ENCODE measurements at regions of chr16 and their contacts with region 1.

Region 1: DNA sequence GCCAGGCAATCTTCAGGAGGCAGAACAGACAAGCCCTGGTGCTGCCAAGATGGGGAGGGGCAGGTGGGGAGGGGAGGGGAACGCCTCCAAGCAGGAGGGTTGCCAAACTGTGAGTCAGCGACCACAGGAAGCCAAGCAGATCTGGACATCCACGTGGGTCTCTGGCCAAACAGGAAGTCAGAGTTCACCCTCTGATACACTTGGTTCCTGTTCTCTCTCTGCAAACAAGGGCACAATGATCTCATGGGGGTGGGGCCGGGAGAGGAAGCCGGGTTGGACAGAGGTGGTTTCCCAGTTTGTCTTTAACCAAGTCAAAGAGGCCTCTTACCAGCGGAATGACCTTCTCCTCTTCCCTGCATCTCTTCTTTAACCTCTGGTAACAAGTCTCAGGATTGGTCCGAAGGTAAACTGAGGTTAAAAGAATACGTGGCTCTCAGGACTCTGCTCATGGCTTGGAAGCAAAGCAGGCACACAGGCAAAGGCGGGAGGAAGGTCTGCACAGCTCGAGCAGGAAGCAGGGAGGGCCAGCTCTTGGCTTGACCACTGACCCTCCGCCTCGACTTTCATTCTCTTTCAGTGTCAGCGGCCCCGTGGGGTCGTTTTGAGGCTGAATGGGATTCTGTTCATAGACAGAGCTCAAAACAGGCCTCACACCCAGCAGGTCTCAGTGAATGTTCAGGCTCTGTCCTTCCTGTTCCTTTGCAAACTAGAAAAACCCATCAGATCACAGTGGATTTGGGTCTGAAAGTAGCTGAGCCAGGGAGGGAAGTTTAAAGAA is 32.9 kb downstream of the TK2 start:
- DNase-seq: peak; percentile 91 to 98
- H3K4me3 ChIP-seq: peak overlapping the region; percentile 25; the same call in 1 of the 2 replicates
- H3K27ac ChIP-seq: peak overlapping the region; percentile 84
- H3K4me1 ChIP-seq: peaks cover 78% of the 10 kb centered on the region
- H3K27me3 ChIP-seq: no peaks in the 10 kb centered on the region
- CTCF ChIP-seq: no peak

Region 2: DNA sequence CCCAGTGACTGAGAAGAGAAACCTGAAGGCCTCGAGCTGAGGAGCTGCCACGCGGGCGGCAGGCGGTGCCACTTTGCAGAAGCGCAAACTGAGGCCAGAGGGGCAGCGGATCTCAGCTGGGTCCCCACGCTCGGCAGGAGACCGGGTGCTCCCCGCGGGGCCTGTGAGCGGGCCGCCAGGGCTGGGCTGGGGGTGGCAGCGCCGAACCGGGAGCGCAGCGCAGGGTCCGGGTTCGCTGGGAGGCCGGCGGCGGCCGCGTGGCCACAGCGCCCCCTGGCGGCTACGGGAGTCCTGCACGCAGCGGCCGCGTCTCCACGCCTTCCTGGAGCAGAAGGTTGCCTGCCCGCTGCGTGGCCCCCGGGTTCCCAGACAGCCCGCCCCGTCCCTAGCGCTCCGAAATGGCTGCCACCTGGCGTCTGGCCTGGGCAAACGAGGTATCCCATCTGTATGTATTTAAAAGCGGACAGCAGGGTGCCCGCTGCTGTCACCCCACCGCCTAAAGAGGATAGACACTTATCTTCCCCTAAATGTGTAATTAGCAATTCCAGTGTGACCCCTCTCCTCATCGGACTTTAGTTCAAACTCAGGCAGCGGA is 246.6 kb before region 1 on chr16:
- CTCF ChIA-PET with region 1: no interaction called
- POLR2A ChIA-PET with region 1: no interaction called
- intact Hi-C with region 1: loop called (anchors 10 kb)
- DNase-seq: peak in 1 of 2 experiments; percentile 54
- H3K4me3 ChIP-seq: peak overlapping the region; percentile 46; the same call in 1 of the 2 replicates
- H3K27ac ChIP-seq: no peak overlapping the region
- H3K4me1 ChIP-seq: peaks cover 28% of the 10 kb centered on the region
- H3K27me3 ChIP-seq: no peaks in the 10 kb centered on the region
- CTCF ChIP-seq: peak; percentile 81

Region 3: DNA sequence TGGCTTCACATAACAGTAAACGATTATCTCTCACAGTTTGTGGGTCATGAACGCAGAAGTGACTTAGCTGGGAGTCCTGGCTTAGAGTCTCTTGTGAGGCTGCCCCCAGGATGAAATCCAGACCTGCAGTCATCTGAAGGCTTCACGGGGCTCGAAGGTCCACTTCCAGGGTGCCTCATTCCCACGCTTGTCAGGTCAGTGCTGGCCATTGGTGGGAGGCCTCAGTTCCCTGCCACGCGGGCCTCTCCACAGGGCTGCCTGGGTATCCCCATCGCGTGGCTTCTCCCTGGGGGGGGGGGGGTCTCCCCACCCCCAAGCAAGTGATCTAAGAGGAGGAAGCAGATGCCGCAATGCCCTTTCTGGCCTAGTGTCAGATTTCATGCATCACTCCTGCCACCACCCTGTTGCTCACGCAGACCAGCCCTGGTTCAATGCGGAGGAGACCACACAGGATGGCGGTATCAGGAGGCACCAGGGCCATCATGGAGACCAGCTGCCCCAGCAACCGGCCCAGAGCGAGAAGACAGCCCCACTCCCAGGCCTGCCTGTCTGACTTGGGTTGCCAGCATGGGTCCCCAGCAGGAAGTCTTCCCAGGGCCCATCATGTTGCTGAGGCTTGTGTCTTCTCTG is 227.8 kb before region 1 on chr16:
- CTCF ChIA-PET with region 1: no interaction called
- POLR2A ChIA-PET with region 1: no interaction called
- intact Hi-C with region 1: no loop called
- DNase-seq: no peak
- H3K4me3 ChIP-seq: no peak overlapping the region
- H3K27ac ChIP-seq: no peak overlapping the region
- H3K4me1 ChIP-seq: 0 out of 2 replicates have a peak, but pooled peaks cover 3% of the 10 kb centered on the region
- H3K27me3 ChIP-seq: no peaks in the 10 kb centered on the region
- CTCF ChIP-seq: no peak

Region 4: DNA sequence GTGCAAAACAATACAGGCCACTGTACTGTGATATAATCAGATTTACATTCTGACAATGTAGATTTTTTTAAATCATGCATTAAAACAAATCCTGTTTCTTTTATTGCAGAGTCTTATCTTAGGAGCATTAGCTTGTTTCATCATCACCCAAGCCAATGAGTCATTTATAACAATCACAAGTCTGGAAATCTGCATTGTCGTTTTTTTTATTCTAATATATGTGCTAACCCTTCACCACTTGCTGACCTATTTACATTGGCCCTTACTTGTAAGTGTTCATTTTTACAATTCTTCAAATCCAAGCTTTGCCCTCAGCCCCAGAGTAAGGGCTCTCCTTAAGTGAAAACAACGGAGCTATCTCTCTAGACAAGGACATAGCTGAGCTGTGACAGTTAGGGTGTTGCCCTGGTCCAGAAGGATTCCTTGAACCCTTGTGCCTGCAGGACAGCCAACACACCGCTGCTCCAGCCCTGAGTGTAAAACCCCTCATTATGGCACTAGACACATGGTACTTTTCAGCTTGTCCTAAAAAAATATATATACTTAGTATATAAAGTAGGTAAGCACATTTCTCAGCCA is 52.9 kb after region 1 on chr16:
- CTCF ChIA-PET with region 1: no interaction called
- POLR2A ChIA-PET with region 1: no interaction called
- intact Hi-C with region 1: no loop called
- DNase-seq: peak in 1 of 2 experiments; percentile 76
- H3K4me3 ChIP-seq: no peak overlapping the region
- H3K27ac ChIP-seq: peak overlapping the region; percentile 22
- H3K4me1 ChIP-seq: peaks cover 22% of the 10 kb centered on the region
- H3K27me3 ChIP-seq: no peaks in the 10 kb centered on the region
- CTCF ChIP-seq: no peak

Region 5: GRCh38 chr16:66934153-66934838 is 417.3 kb after region 1 on chr16 and contains the start of gene CIAO2B:
- CTCF ChIA-PET with region 1: no interaction called
- POLR2A ChIA-PET with region 1: interaction called, 3 read pairs
- intact Hi-C with region 1: loop called (anchors 10 kb)
- DNase-seq: peak; percentile 63 to 83
- H3K4me3 ChIP-seq: peak within 1 kb of the TSS; percentile 91
- H3K27ac ChIP-seq: peak within 1 kb of the TSS; percentile 48
- H3K4me1 ChIP-seq: peaks cover 42% of the 10 kb centered on the region
- H3K27me3 ChIP-seq: no peaks in the 10 kb centered on the region
- CTCF ChIP-seq: no peak
- total RNA-seq, gene CIAO2B: 81.7 and 87.1 TPM in 2 replicates

Measured in PC-9 (cell line).